MCF 10A (cell line): ENCODE measurements at regions of chr3 and their contacts with region 1.

Region 1: DNA sequence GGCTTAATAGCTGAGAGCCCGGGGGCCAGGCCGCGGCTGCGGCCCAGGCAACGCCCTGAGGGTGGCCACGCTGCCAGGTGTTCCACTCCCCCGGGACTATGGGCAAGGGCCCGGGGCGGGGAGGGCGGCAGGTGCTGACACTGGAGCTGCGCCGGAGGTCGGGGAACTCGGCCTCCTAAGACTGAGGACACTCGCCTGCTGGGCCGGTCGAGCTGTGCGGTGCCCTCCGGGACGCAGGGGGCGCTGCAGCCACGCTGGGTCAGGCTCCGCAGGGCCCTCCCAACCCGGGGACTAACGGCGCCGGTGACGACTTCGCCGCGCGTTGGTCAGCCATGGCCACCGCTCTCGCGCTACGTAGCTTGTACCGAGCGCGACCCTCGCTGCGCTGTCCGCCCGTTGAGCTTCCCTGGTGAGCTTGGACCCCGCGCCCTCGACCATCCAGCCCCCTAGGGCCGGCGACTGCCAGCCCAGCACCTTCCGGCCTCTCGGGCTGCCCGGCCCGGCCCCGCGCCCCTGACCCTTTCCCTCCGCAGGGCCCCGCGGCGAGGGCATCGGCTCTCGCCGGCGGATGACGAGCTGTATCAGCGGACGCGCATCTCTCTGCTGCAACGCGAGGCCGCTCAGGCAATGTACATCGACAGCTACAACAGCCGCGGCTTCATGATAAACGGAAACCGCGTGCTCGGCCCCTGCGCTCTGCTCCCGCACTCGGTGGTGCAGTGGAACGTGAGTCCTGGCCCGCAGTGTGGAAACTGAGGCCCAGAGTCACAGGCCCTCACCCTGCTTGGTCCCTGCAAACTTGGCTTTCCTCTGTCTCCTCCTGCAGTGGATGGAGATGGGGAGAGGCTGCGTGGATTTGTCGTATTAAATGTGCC is at the start of gene NDUFAF3:
- DNase-seq: peak; percentile 93
- H3K4me3 Mint-ChIP-seq: peak within 1 kb of the TSS; percentile 89
- H3K27ac Mint-ChIP-seq: peak within 1 kb of the TSS; percentile 95
- H3K4me1 Mint-ChIP-seq: peaks cover 13% of the 10 kb centered on the region
- H3K27me3 Mint-ChIP-seq: no peaks in the 10 kb centered on the region
- CTCF ChIP-seq: peak; percentile 95
- total RNA-seq, gene NDUFAF3: 77.8 and 86.5 TPM in 2 replicates

Region 2: DNA sequence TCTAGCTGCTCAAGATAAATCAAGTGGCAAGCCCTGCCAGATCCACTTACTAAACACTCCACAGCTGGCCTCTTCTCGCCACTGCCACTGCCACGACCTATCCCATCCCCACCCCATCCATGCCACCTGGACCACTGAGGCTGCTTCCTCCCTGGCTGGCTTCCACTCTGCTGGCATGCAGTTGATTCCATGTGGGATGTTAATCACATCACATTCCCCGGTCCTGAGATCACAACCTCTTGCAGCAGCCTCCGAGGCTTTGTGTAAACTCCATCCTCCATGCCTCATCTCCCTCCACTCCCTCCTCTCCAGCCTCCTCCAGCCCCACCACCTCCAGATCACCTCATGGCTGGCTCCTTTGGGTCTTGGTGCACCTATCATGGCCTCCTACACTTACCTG is 344.0 kb before region 1 on chr3:
- CTCF ChIA-PET with region 1: no interaction called
- POLR2A ChIA-PET with region 1: no interaction called
- intact Hi-C with region 1: no loop called
- DNase-seq: no peak
- H3K4me3 Mint-ChIP-seq: no peak overlapping the region
- H3K27ac Mint-ChIP-seq: no peak overlapping the region
- H3K4me1 Mint-ChIP-seq: peaks cover 6% of the 10 kb centered on the region
- H3K27me3 Mint-ChIP-seq: no peaks in the 10 kb centered on the region
- CTCF ChIP-seq: no peak

Region 3: DNA sequence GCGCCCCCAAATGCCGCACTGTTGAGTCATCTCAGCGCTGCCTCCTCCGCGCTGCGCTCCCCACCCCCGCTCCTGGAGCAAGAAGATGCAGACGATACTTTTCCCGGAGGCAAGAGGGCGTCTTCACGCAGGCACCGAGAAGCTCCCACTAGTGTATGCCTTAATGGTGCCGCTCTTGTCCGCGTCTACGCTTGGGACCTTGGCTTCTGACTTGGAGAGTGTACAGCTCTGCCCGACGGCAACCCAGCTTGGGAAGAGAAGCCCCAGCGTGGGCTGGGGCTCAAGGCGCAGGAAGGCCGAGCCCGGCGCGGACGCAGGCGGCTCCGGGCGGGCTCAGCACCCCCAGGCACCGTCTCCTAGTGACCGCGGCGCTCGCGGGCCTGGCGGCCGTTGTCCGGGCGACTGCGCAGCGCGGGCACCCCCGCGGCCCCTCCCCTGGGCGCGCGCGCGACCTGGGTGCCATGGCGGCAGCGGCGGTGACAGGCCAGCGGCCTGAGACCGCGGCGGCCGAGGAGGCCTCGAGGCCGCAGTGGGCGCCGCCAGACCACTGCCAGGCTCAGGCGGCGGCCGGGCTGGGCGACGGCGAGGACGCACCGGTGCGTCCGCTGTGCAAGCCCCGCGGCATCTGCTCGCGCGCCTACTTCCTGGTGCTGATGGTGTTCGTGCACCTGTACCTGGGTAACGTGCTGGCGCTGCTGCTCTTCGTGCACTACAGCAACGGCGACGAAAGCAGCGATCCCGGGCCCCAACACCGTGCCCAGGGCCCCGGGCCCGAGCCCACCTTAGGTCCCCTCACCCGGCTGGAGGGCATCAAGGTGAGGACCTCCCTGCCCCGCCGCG is 32.0 kb before region 1 on chr3 and contains the start of gene P4HTM:
- CTCF ChIA-PET with region 1: interaction called, 11 read pairs
- POLR2A ChIA-PET with region 1: interaction called, 131 read pairs
- intact Hi-C with region 1: no loop called
- DNase-seq: peak; percentile 82
- H3K4me3 Mint-ChIP-seq: peak within 1 kb of the TSS; percentile 89
- H3K27ac Mint-ChIP-seq: peak within 1 kb of the TSS; percentile 71
- H3K4me1 Mint-ChIP-seq: peaks cover 29% of the 10 kb centered on the region
- H3K27me3 Mint-ChIP-seq: no peaks in the 10 kb centered on the region
- CTCF ChIP-seq: peak; percentile 13
- total RNA-seq, gene P4HTM: 18.8 and 26.1 TPM in 2 replicates

Region 4: DNA sequence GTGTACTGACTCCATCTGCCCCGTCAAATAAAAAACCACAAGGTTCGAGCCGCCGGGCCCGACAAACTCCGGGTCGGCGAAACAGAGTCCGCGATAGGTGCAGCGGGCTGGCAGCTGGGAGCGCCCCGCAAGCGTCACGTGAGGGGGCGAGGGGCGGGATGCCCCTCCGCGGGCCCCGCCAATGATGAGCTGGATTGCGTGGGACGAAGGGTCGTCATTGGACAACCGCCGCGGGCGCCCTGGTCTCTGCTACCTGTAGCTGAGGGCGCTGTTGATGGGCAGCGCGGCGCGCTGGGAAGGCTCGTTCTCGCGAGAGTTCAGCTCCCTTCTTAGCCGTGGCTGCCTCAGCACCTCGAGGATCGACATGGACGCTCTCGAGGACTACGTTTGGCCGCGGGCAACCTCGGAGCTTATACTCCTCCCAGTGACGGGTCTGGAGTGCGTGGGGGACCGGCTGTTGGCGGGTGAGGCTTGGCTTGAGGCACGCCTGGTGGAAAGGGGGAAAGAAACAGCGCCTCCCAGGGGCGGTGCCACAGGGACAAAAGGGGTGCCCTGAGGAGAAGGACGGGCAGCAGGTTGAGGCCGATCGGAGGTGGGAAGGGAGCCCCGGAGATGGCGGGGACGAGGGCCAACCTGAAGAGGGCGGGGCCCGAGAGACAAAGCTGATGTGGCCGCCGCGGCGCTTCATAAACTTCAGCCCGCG is 14.8 kb before region 1 on chr3 and contains the start of gene WDR6:
- CTCF ChIA-PET with region 1: interaction called, 10 read pairs
- POLR2A ChIA-PET with region 1: interaction called, 251 read pairs
- intact Hi-C with region 1: no loop called
- DNase-seq: peak; percentile 98
- H3K4me3 Mint-ChIP-seq: peak within 1 kb of the TSS; percentile 99
- H3K27ac Mint-ChIP-seq: peak within 1 kb of the TSS; percentile 99
- H3K4me1 Mint-ChIP-seq: peaks cover 10% of the 10 kb centered on the region
- H3K27me3 Mint-ChIP-seq: no peaks in the 10 kb centered on the region
- CTCF ChIP-seq: peak; percentile 33
- total RNA-seq, gene WDR6: 112 and 116 TPM in 2 replicates

Region 5: DNA sequence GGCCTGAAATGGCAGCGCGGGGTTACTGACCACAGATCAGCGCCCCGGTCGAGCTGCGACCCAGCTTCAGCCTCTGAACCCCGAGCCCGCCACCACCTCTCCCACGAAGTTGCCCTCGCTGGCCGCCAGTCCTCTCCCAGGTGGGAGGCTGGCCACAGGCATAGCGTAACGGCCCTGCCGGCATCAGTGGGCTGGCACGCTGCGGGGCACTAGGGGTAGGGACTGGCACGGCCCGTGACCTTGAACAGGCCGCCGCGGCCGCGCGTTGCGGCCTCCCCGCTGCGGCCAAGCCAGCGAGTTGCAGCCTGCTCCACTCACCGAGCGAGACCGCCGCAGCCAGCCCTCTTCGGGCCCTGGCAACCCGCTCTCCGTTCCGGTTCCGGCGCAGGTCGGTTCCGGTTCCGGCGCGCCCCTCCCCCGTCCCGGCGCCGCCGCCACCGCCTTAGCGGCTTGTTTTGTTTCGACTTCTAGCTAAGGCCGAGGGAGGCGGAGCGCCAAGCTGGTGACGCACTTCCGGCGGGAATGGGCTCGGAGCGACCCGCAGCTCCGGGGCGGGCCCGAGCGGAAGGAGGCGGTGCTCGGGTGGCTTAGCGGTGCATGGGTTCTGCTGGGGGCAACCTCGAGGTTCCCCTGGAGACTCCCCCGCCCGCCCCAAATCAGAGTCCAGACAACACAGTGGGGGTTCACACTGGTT is 98.5 kb after region 1 on chr3 and contains the start of gene USP19:
- CTCF ChIA-PET with region 1: interaction called, 6 read pairs
- POLR2A ChIA-PET with region 1: interaction called, 15 read pairs
- intact Hi-C with region 1: no loop called
- DNase-seq: peak; percentile 92
- H3K4me3 Mint-ChIP-seq: peak within 1 kb of the TSS; percentile 75
- H3K27ac Mint-ChIP-seq: peak within 1 kb of the TSS; percentile 79
- H3K4me1 Mint-ChIP-seq: peaks cover 6% of the 10 kb centered on the region
- H3K27me3 Mint-ChIP-seq: no peaks in the 10 kb centered on the region
- CTCF ChIP-seq: no peak
- total RNA-seq, gene USP19: 39.3 and 51.4 TPM in 2 replicates

Region 6: DNA sequence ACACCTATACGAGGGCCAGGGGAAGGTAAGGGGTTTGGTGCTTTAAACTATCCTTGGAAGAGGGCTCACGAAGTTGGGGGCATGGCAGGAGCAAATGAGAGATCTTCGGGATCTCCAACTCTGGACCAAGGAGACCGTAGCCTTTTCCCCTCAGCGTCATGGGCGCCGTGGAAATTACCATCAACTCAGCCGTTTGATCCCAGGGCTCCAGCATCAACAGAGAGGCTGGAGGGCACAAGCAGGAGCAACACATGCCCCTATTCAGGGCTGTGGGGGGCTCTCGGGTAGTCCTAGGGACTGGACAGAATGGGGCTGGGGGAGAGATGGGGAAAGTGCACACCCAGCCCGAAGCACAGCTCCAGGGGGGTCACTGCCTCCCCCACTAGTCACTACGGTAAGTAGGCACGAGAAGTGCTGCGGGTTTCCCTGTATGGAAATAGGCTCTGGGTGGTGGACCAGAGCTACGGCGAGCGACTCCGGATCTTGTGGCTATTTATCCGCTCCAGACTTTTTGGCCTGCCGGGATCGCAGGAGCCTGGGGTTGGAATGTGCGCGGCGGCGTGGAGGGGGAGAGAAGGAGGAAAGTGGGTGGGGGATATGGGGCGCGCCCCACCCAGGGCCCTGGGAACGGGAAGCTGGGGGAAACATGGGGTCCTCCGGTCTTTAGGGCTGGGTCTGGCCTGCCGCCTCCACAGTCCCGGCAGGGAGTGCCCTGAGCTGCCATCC is 111.3 kb after region 1 on chr3:
- CTCF ChIA-PET with region 1: no interaction called
- POLR2A ChIA-PET with region 1: interaction called, 11 read pairs
- intact Hi-C with region 1: no loop called
- DNase-seq: peak; percentile 87
- H3K4me3 Mint-ChIP-seq: peak overlapping the region; percentile 90
- H3K27ac Mint-ChIP-seq: peak overlapping the region; percentile 84
- H3K4me1 Mint-ChIP-seq: peaks cover 16% of the 10 kb centered on the region
- H3K27me3 Mint-ChIP-seq: no peaks in the 10 kb centered on the region
- CTCF ChIP-seq: no peak

Region 7: GRCh38 chr3:49158108-49158709 is 136.2 kb after region 1 on chr3:
- CTCF ChIA-PET with region 1: interaction called, 4 read pairs
- POLR2A ChIA-PET with region 1: interaction called, 3 read pairs
- intact Hi-C with region 1: loop called (anchors 10 kb)
- DNase-seq: peak; percentile 68
- H3K4me3 Mint-ChIP-seq: no peak overlapping the region
- H3K27ac Mint-ChIP-seq: no peak overlapping the region
- H3K4me1 Mint-ChIP-seq: no peaks in the 10 kb centered on the region
- H3K27me3 Mint-ChIP-seq: no peaks in the 10 kb centered on the region
- CTCF ChIP-seq: peak; percentile 53